ENCODE measurements at regions of chrX and their contacts with region 1.

Region 1: GRCh38 chrX:152658302-152658701 is 20.6 kb downstream of the GABRQ start:
- DNase-seq: peak in 1 of 2 experiments; percentile 48
- H3K4me3 ChIP-seq: no peak overlapping the region
- H3K27ac ChIP-seq: no peak overlapping the region
- H3K4me1 ChIP-seq: no peaks in the 10 kb centered on the region
- H3K27me3 ChIP-seq: no peaks in the 10 kb centered on the region
- CTCF ChIP-seq: peak; percentile 38 to 60 (median 59)
- EP300 ChIP-seq: no peak
- POLR2A ChIP-seq: no peak
- RAD21 ChIP-seq: peak; percentile 37 to 53; a peak in 3 of 4 replicates

Region 2: DNA sequence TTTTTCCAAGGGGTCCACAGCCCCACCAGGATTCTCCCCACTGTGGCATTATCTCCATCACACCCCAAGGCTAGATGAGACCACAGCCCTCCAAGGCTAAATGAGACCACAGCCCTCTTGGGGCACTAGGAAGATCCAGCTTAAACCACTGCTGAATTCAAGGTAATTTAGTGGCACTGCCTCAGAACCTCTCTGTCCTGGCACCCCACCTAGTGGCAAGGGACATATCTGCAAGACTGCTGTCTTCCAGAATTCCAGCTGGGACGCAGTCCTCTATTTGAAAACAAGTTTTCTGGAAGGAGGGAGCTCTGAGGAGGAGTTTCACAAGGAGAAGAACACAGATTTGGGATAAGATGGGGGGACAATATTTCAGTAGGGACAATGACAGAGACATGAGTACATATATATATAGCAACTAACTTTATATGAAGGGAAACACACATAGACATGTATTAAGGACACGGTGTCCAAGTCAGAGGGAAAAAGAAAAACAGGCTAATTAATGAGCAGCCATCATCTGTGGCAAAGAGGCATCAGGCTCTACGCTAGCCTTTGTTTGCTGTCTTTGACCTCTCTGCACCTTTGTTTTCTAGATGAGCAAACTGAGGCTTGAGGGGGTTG is 163.0 kb after region 1 on chrX:
- CTCF ChIA-PET with region 1: interaction called, 10 read pairs
- POLR2A ChIA-PET with region 1: no interaction called
- DNase-seq: peak; percentile 9 to 69
- H3K4me3 ChIP-seq: no peak overlapping the region
- H3K27ac ChIP-seq: no peak overlapping the region
- H3K4me1 ChIP-seq: no peaks in the 10 kb centered on the region
- H3K27me3 ChIP-seq: no peaks in the 10 kb centered on the region; a peak in 1 of 7 replicates
- CTCF ChIP-seq: peak; percentile 43 to 76 (median 67)
- EP300 ChIP-seq: no peak
- POLR2A ChIP-seq: no peak
- RAD21 ChIP-seq: peak; percentile 74 to 78